ENCODE measurements at regions of chr12 and their contacts with region 1.

Region 1: DNA sequence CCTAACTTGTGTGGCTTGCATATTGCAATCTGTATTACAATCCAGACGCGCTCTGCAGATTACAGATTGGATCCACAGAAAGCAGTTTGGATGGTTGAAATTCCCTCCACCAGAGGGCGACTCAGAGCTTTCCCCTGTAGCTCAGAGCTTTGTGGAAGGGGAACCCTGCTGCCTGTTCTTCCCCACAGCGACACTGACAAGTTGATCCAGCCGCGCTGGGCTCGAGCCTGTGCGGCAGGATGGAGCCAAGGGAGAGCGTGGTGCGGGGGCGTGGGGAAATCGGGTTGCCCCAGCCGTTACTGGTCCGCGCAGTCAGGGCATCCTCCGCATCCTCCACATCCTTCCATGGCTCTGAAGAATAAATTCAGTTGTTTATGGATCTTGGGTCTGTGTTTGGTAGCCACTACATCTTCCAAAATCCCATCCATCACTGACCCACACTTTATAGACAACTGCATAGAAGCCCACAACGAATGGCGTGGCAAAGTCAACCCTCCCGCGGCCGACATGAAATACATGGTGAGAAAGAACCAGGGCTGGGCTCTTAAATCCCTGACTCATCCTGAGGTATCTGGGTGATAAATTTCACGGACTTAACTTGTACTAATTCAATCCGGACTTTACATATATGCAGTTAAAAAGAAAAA is at the start of gene GLIPR1L1:
- DNase-seq: peak; percentile 89
- ATAC-seq: peak; percentile 85
- H3K4me3 ChIP-seq: peak within 1 kb of the TSS; percentile 68
- H3K27ac ChIP-seq: peak within 1 kb of the TSS; percentile 53
- H3K4me1 ChIP-seq: no peaks in the 10 kb centered on the region
- H3K27me3 ChIP-seq: no peaks in the 10 kb centered on the region
- CTCF ChIP-seq: peak; percentile 85
- POLR2A ChIP-seq: no peak
- RAD21 ChIP-seq: peak; percentile 75
- total RNA-seq, gene GLIPR1L1: not detected in 2 replicates

Region 2: GRCh38 chr12:74552201-74552600 is 782.3 kb before region 1 on chr12:
- CTCF ChIA-PET with region 1: no interaction called
- POLR2A ChIA-PET with region 1: no interaction called
- dilution Hi-C with region 1: no loop called
- in situ Hi-C with region 1: no loop called
- intact Hi-C with region 1: no loop called
- DNase-seq: no peak
- ATAC-seq: no peak
- H3K4me3 ChIP-seq: no peak overlapping the region
- H3K27ac ChIP-seq: no peak overlapping the region
- H3K4me1 ChIP-seq: no peaks in the 10 kb centered on the region
- H3K27me3 ChIP-seq: no peaks in the 10 kb centered on the region
- CTCF ChIP-seq: no peak; the same call in 1 of the 2 replicates
- POLR2A ChIP-seq: no peak
- RAD21 ChIP-seq: no peak

Region 3: GRCh38 chr12:75378354-75378753 is 43.8 kb after region 1 on chr12:
- CTCF ChIA-PET with region 1: no interaction called
- POLR2A ChIA-PET with region 1: no interaction called
- dilution Hi-C with region 1: no loop called
- in situ Hi-C with region 1: no loop called
- intact Hi-C with region 1: loop called (anchors 2 kb)
- DNase-seq: peak; percentile 68
- ATAC-seq: peak; percentile 69
- H3K4me3 ChIP-seq: no peak overlapping the region
- H3K27ac ChIP-seq: peak overlapping the region; percentile 76; the same call in 1 of the 2 replicates
- H3K4me1 ChIP-seq: peaks cover 8% of the 10 kb centered on the region
- H3K27me3 ChIP-seq: no peaks in the 10 kb centered on the region
- CTCF ChIP-seq: no peak
- POLR2A ChIP-seq: no peak
- RAD21 ChIP-seq: no peak

Region 4: GRCh38 chr12:75390899-75391538 is 56.5 kb after region 1 on chr12 and contains the start of gene GLIPR1L2:
- CTCF ChIA-PET with region 1: no interaction called
- POLR2A ChIA-PET with region 1: no interaction called
- dilution Hi-C with region 1: no loop called
- in situ Hi-C with region 1: no loop called
- intact Hi-C with region 1: loop called (anchors 2 kb)
- DNase-seq: peak; percentile 97
- ATAC-seq: peak; percentile 99
- H3K4me3 ChIP-seq: peak within 1 kb of the TSS; percentile 51
- H3K27ac ChIP-seq: peak within 1 kb of the TSS; percentile 81
- H3K4me1 ChIP-seq: 0 out of 2 replicates have a peak, but pooled peaks cover 2% of the 10 kb centered on the region
- H3K27me3 ChIP-seq: no peaks in the 10 kb centered on the region
- CTCF ChIP-seq: peak; percentile 91
- POLR2A ChIP-seq: no peak
- RAD21 ChIP-seq: peak; percentile 66
- total RNA-seq, gene GLIPR1L2: not detected in 2 replicates

Region 5: DNA sequence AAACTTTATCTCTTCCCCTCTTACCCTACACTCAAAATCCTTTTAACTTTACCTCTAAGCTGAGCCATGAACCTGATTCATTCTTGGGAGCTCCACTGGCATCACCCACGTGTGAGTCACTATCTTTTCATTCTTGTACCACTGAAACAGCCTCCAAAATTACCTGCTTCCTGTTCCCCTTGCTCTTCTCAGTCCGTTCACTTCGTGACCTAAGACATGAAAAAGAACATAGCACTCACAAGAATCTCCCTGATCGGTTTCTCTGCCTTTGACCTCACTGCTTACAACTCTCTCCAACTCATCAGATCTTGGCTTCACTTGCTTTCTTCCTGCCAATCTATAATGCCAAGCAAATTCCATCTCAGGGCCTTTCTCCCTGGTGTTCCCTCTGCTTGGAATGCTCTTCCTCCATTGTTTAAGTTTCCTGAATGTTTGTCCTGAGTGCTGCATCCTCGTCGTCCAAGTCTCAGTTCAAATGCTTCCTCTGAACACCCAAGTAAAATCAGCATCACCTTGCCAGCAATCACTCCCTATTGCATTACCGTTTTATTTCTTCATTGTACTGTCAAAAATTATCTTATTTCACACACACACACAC is 155.2 kb after region 1 on chr12:
- CTCF ChIA-PET with region 1: no interaction called
- POLR2A ChIA-PET with region 1: no interaction called
- dilution Hi-C with region 1: no loop called
- in situ Hi-C with region 1: loop called (anchors 5 kb)
- intact Hi-C with region 1: loop called (anchors 1 kb)
- DNase-seq: peak; percentile 63
- ATAC-seq: peak; percentile 31
- H3K4me3 ChIP-seq: no peak overlapping the region
- H3K27ac ChIP-seq: peak overlapping the region; percentile 13; the same call in 1 of the 2 replicates
- H3K4me1 ChIP-seq: peaks cover 7% of the 10 kb centered on the region
- H3K27me3 ChIP-seq: no peaks in the 10 kb centered on the region
- CTCF ChIP-seq: no peak
- POLR2A ChIP-seq: no peak
- RAD21 ChIP-seq: no peak

Region 6: GRCh38 chr12:75505706-75506312 is 171.3 kb after region 1 on chr12:
- CTCF ChIA-PET with region 1: interaction called, 3 read pairs
- POLR2A ChIA-PET with region 1: no interaction called
- dilution Hi-C with region 1: no loop called
- in situ Hi-C with region 1: no loop called
- intact Hi-C with region 1: loop called (anchors 1 kb)
- DNase-seq: peak; percentile 67
- ATAC-seq: peak; percentile 59
- H3K4me3 ChIP-seq: no peak overlapping the region
- H3K27ac ChIP-seq: no peak overlapping the region
- H3K4me1 ChIP-seq: peaks cover 1% of the 10 kb centered on the region; the same call in 1 of the 2 replicates
- H3K27me3 ChIP-seq: no peaks in the 10 kb centered on the region
- CTCF ChIP-seq: peak; percentile 75
- POLR2A ChIP-seq: no peak
- RAD21 ChIP-seq: peak; percentile 66

Measured in IMR-90 (cell line).